Posterior vena cava (tissue), 2 donors: ENCODE measurements at regions of chr15 and their contacts with region 1.

Region 1: GRCh38 chr15:99169769-99170311 is 65.0 kb downstream of the SYNM start:
- DNase-seq: peak; percentile 83

Region 2: DNA sequence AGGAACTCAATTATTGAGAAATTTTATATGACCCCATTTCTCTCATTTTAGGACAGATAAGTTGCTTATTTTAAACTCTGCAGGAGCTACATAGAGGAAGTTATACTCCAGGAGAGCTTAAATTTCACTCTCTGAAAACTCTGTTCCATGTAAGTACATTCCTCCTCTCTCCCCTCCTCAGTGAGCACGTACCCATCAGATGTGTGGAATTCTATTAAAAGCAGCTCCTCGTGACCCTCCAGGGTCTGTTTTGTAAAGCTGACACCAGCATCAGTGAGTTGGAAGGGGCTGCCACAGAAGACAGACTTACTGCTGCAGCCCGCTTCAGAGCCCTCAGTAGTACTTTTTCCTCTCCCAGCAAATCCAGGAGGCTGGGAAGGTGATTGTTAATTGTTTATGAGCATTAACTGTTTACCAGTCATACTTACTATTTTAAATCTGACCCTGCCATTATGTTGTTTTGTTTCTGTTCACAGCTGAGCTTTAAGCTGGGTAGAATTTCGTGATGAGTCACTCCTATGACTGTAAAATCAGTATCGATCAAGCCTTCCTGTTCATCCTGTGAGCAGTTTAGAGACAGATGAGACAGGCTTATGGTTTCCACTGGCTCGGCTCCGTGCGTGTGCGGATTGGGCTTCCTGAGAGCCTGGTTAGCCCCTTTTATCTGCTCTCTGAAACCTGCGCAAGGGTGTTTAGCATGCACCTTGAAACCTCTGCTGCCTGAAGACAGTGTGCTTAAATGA is 501.1 kb before region 1 on chr15:
- intact Hi-C with region 1: no loop called
- DNase-seq: no peak

Region 3: GRCh38 chr15:99104788-99105513 is 64.9 kb before region 1 on chr15 and contains the start of gene SYNM:
- intact Hi-C with region 1: loop called in 1 of 2 experiments (anchors 5 kb)
- DNase-seq: peak; percentile 90
- total RNA-seq, gene SYNM: 447 to 863 TPM

Region 4: DNA sequence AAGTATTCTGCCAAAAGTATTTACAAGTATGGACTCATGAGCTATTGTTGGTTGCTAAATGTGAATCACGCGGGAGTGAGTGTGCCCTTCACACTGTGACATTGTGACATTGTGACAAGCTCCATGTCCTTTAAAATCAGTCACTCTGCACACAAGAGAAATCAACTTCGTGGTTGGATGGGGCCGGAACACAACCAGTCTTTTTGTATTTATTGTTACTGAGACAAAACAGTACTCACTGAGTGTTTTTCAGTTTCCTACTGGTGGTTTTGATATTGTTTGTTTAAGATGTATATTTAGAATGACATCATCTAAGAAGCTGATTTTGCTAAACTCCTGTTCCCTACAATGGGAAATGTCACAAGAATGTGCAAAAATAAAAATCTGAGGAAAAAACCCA is 34.6 kb before region 1 on chr15:
- intact Hi-C with region 1: loop called in 1 of 2 experiments (anchors 1 kb)
- DNase-seq: no peak

Region 5: GRCh38 chr15:99213187-99213811 is 43.5 kb after region 1 on chr15:
- intact Hi-C with region 1: loop called in 1 of 2 experiments (anchors 5 kb)
- DNase-seq: peak; percentile 92